ENCODE measurements at regions of chr5 and their contacts with region 1.

Region 1: GRCh38 chr5:108919591-108920326 is 172.1 kb downstream of the FER start:
- DNase-seq: no peak
- ATAC-seq: no peak
- H3K4me3 ChIP-seq: no peak overlapping the region
- H3K4me3 Mint-ChIP-seq: no peak overlapping the region
- H3K27ac ChIP-seq: no peak overlapping the region
- H3K27ac Mint-ChIP-seq: no peak overlapping the region
- H3K4me1 ChIP-seq: no peaks in the 10 kb centered on the region
- H3K4me1 Mint-ChIP-seq: no peaks in the 10 kb centered on the region
- H3K27me3 ChIP-seq: no peaks in the 10 kb centered on the region
- H3K27me3 Mint-ChIP-seq: no peaks in the 10 kb centered on the region
- CTCF ChIP-seq: peak; percentile 36

Region 2: GRCh38 chr5:108054349-108054748 is 865.4 kb before region 1 on chr5:
- CTCF ChIA-PET with region 1: no interaction called
- POLR2A ChIA-PET with region 1: no interaction called
- intact Hi-C with region 1: no loop called
- DNase-seq: no peak
- ATAC-seq: no peak
- H3K4me3 ChIP-seq: no peak overlapping the region
- H3K4me3 Mint-ChIP-seq: no peak overlapping the region
- H3K27ac ChIP-seq: no peak overlapping the region
- H3K27ac Mint-ChIP-seq: no peak overlapping the region
- H3K4me1 ChIP-seq: no peaks in the 10 kb centered on the region
- H3K4me1 Mint-ChIP-seq: no peaks in the 10 kb centered on the region
- H3K27me3 ChIP-seq: no peaks in the 10 kb centered on the region
- H3K27me3 Mint-ChIP-seq: no peaks in the 10 kb centered on the region
- CTCF ChIP-seq: no peak

Region 3: DNA sequence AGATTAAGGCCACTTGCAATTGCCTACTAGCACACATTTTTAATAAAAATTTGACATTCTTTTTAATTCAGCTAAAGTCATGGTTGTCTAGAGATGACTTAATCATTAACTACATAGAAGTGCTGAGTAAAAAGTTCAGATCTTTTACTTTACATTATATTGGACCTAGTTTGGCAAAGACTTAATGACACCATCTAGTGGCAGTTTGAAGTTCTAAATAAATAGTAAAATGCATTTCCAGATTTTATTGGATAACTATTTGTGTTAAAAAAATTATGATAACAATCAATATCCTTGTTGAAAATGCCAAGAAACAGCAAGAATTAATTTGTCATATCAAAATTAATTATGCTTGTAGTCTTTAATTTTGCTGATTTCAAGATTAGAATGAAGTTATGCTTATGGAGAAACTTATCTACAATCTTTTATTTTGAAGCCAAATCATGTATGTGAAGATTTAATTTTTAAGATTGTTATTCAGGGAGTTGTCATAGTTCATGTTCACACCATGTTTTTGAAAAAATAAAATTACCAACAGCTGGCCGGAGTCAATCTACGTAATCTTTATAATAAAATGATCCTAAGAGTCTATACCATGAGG is 559.6 kb after region 1 on chr5:
- CTCF ChIA-PET with region 1: no interaction called
- POLR2A ChIA-PET with region 1: no interaction called
- intact Hi-C with region 1: loop called (anchors 10 kb)
- DNase-seq: peak; percentile 22
- ATAC-seq: no peak
- H3K4me3 ChIP-seq: no peak overlapping the region
- H3K4me3 Mint-ChIP-seq: no peak overlapping the region
- H3K27ac ChIP-seq: no peak overlapping the region
- H3K27ac Mint-ChIP-seq: no peak overlapping the region
- H3K4me1 ChIP-seq: peaks cover 0 to 4% of the 10 kb centered on the region in 2 donors
- H3K4me1 Mint-ChIP-seq: peaks cover 1% of the 10 kb centered on the region
- H3K27me3 ChIP-seq: no peaks in the 10 kb centered on the region
- H3K27me3 Mint-ChIP-seq: peaks cover 10% of the 10 kb centered on the region
- CTCF ChIP-seq: peak; percentile 59